Posterior vena cava (tissue), 2 donors: ENCODE measurements at regions of chr10 and their contacts with region 1.

Region 1: DNA sequence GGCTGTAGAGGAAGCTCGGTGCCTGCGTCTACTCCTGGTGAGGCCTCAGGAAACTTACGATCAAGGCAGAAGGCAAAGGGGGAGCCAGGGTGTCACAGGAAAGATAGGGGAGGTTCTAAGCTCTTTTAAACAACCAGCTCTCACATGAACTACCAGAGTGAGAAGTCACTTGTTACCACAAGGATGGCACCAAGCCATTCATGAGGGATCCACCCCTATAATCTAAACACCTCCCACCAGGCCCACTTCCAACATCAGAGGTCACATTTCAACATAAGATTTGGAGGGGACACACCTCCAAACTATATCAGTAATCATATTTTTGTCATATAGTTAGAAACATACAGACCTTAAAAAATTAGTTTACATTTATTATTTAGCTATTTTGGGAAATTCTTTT is 9.4 kb downstream of the NOC3L start:
- DNase-seq: no peak

Region 2: GRCh38 chr10:94402015-94402842 is 48.9 kb after region 1 on chr10 and contains the start of gene TBC1D12:
- intact Hi-C with region 1: no loop called
- DNase-seq: peak; percentile 98
- total RNA-seq, gene TBC1D12: 12.0 to 12.5 TPM

Region 3: GRCh38 chr10:94524146-94524545 is 170.8 kb after region 1 on chr10:
- intact Hi-C with region 1: loop called in 1 of 2 experiments (anchors 5 kb)
- DNase-seq: no peak